Activated CD8-positive, alpha-beta memory T cell treated with anti-CD3 and anti-CD28 coated beads, Interleukin-2, amount 10 ng/mL, durations not matched to agents 7 days and 5 days (primary cell): ENCODE measurements at regions of chr22 and their contacts with region 1.

Region 1: GRCh38 chr22:31630331-31631329 is 31.4 kb downstream of the PISD start:
- DNase-seq: peak; percentile 93
- ATAC-seq: peak; percentile 88
- H3K4me3 Mint-ChIP-seq: peak overlapping the region; percentile 85
- H3K27ac Mint-ChIP-seq: peak overlapping the region; percentile 88
- H3K4me1 Mint-ChIP-seq: peaks cover 41% of the 10 kb centered on the region
- H3K27me3 Mint-ChIP-seq: no peaks in the 10 kb centered on the region

Region 2: GRCh38 chr22:31451709-31452571 is 178.7 kb before region 1 on chr22:
- CTCF ChIA-PET with region 1: interaction called, 17 read pairs
- DNase-seq: no peak
- ATAC-seq: peak; percentile 63
- H3K4me3 Mint-ChIP-seq: no peak overlapping the region
- H3K27ac Mint-ChIP-seq: peak overlapping the region; percentile 23
- H3K4me1 Mint-ChIP-seq: peaks cover 7% of the 10 kb centered on the region
- H3K27me3 Mint-ChIP-seq: no peaks in the 10 kb centered on the region

Region 3: GRCh38 chr22:31561238-31561887 is 69.3 kb before region 1 on chr22:
- CTCF ChIA-PET with region 1: interaction called, 58 read pairs
- DNase-seq: peak; percentile 69
- ATAC-seq: peak; percentile 89
- H3K4me3 Mint-ChIP-seq: no peak overlapping the region
- H3K27ac Mint-ChIP-seq: peak overlapping the region; percentile 45
- H3K4me1 Mint-ChIP-seq: peaks cover 2% of the 10 kb centered on the region
- H3K27me3 Mint-ChIP-seq: no peaks in the 10 kb centered on the region

Region 4: DNA sequence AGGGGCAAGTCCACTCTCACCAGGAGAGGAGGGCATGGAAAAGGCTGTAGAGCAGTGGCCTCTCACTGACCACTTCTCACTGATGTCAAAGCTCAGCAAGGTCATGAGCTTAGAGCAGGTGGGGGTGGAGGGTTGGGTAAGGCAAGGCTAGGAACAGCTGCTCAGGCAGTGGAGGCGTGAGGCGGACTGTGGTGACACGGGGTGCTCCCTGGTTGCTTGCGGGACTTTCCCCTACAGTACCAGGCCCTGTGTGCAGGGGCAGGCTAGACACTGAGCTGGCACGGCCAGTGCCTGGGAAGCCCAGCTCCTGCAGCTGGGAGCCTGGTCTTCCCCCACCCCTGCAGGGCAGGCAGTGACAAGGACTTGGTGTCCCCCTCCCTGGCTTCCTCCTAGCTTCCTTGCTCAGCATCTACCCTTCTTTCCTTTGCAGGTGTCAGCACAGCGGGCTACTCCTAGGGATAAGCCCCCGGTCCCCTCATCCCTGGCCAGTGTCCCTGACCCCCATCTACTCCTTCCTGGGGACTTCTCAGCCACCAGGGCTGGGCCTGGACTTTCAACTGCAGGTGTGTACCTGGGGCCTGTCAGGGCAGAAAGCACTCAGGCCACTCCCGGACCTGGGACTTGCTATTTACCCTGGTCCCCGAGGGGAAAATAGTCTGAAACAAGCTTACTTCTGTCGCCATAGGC is 14.2 kb before region 1 on chr22:
- CTCF ChIA-PET with region 1: interaction called, 10 read pairs
- DNase-seq: no peak
- ATAC-seq: no peak
- H3K4me3 Mint-ChIP-seq: no peak overlapping the region
- H3K27ac Mint-ChIP-seq: peak overlapping the region; percentile 77
- H3K4me1 Mint-ChIP-seq: peaks cover 24% of the 10 kb centered on the region
- H3K27me3 Mint-ChIP-seq: no peaks in the 10 kb centered on the region